ENCODE measurements at regions of chr2 and their contacts with region 1.

Region 1: GRCh38 chr2:222844323-222844722 is 16.5 kb upstream of the ACSL3 start:
- DNase-seq: no peak
- ATAC-seq: no peak
- H3K4me3 ChIP-seq: no peak overlapping the region
- H3K27ac ChIP-seq: no peak overlapping the region
- H3K4me1 ChIP-seq: peaks cover 40% of the 10 kb centered on the region
- H3K27me3 ChIP-seq: no peaks in the 10 kb centered on the region
- CTCF ChIP-seq: no peak
- EP300 ChIP-seq: no peak
- POLR2A ChIP-seq: no peak
- RAD21 ChIP-seq: no peak

Region 2: GRCh38 chr2:222805541-222806304 is 38.6 kb before region 1 on chr2:
- CTCF ChIA-PET with region 1: no interaction called
- POLR2A ChIA-PET with region 1: interaction called, 25 read pairs
- in situ Hi-C with region 1: no loop called
- intact Hi-C with region 1: no loop called
- DNase-seq: peak; percentile 74
- ATAC-seq: peak; percentile 93
- H3K4me3 ChIP-seq: peak overlapping the region; percentile 29 to 52 (median 34)
- H3K27ac ChIP-seq: peak overlapping the region; percentile 81
- H3K4me1 ChIP-seq: peaks cover 49% of the 10 kb centered on the region
- H3K27me3 ChIP-seq: no peaks in the 10 kb centered on the region
- CTCF ChIP-seq: peak; percentile 21; the same call in 1 of the 2 replicates
- EP300 ChIP-seq: peak in 1 of 2 experiments; percentile 89; a peak in 2 of 4 replicates
- POLR2A ChIP-seq: peak in 1 of 2 experiments; percentile 25; a peak in 1 of 4 replicates
- RAD21 ChIP-seq: no peak